PC-3 (cell line): ENCODE measurements at regions of chr19 and their contacts with region 1.

Region 1: GRCh38 chr19:13493516-13494310 is 12.6 kb downstream of the CACNA1A start:
- DNase-seq: peak; percentile 37
- ATAC-seq: no peak
- H3K4me3 ChIP-seq: no peak overlapping the region
- H3K27ac ChIP-seq: no peak overlapping the region
- H3K4me1 ChIP-seq: no peaks in the 10 kb centered on the region
- H3K27me3 ChIP-seq: peaks cover 51% of the 10 kb centered on the region
- CTCF ChIP-seq: no peak

Region 2: GRCh38 chr19:13381827-13382632 is 111.7 kb before region 1 on chr19:
- CTCF ChIA-PET with region 1: no interaction called
- POLR2A ChIA-PET with region 1: interaction called, 16 read pairs
- intact Hi-C with region 1: no loop called
- DNase-seq: no peak
- ATAC-seq: no peak
- H3K4me3 ChIP-seq: no peak overlapping the region
- H3K27ac ChIP-seq: no peak overlapping the region
- H3K4me1 ChIP-seq: no peaks in the 10 kb centered on the region
- H3K27me3 ChIP-seq: no peaks in the 10 kb centered on the region; the same call in 1 of the 2 replicates
- CTCF ChIP-seq: no peak

Region 3: DNA sequence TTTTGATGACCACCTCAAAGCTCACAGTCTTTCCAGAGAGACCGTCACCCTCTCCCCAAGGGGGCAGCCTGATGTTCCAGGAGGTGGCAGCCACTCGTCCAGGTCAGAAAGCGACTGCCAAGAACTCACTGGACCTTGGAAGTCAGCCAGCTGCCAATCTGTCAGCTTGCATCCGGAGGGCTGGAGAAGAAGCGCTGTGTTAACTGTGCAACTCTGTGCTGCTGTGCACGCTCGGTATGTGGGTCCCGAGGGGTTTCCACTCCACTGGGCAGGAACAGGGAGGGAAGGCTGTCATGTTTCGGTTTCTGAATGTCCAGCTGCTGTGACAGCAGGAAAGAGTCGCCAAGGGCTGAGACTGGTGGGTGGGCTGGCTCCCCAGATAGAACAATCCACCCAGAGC is 76.7 kb before region 1 on chr19:
- CTCF ChIA-PET with region 1: no interaction called
- POLR2A ChIA-PET with region 1: no interaction called
- intact Hi-C with region 1: no loop called
- DNase-seq: peak; percentile 23
- ATAC-seq: peak; percentile 27; the same call in 1 of the 2 replicates
- H3K4me3 ChIP-seq: no peak overlapping the region
- H3K27ac ChIP-seq: no peak overlapping the region
- H3K4me1 ChIP-seq: no peaks in the 10 kb centered on the region
- H3K27me3 ChIP-seq: 0 out of 2 replicates have a peak, but pooled peaks cover 3% of the 10 kb centered on the region
- CTCF ChIP-seq: no peak